Activated naive CD4-positive, alpha-beta T cell treated with anti-CD3 and anti-CD28 coated beads for 36 hours (primary cell): ENCODE measurements at regions of chr9 and their contacts with region 1.

Region 1: DNA sequence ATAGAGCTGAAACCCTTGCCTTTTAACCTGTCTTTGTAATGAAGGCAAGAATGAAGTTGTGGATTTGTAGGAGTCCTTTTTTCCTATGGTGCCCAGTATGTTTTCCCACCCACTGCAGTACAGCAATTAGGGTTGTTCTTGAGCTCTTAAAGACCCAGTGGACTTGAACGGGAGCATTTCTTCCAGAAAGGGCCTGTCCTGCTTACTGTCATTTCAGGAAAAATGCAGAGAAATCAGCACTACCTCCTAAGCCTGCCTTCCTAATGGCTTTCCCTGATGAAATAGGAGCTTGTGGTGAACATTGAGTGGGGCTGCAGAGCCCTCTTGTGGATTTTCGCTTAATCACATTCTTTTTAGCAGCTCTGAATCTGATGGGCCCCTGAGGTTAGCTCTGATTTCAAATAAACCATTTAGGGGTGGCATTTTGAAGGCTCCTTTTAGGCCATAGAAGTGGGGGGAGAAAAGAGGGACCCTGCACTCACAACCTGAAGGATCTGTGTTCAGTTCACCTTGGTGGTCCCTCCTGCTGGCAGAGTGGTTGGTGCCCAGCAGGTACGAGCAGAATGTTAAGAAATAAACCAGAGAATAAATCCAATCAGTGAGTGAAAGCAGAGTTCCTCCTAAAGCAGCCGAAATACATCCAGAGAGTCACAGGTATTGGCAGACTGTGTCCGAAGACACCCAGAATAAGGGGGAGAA is 188.0 kb upstream of the KLF9 start:
- DNase-seq: peak; percentile 71
- H3K4me3 Mint-ChIP-seq: no peak overlapping the region
- H3K27ac Mint-ChIP-seq: no peak overlapping the region
- H3K4me1 Mint-ChIP-seq: peaks cover 8% of the 10 kb centered on the region
- H3K27me3 Mint-ChIP-seq: no peaks in the 10 kb centered on the region

Region 2: GRCh38 chr9:70111042-70111602 is 491.3 kb before region 1 on chr9:
- CTCF ChIA-PET with region 1: interaction called, 16 read pairs
- intact Hi-C with region 1: loop called (anchors 2 kb)
- DNase-seq: peak; percentile 76
- H3K4me3 Mint-ChIP-seq: peak overlapping the region; percentile 22
- H3K27ac Mint-ChIP-seq: no peak overlapping the region
- H3K4me1 Mint-ChIP-seq: peaks cover 9% of the 10 kb centered on the region
- H3K27me3 Mint-ChIP-seq: peaks cover 3% of the 10 kb centered on the region

Region 3: DNA sequence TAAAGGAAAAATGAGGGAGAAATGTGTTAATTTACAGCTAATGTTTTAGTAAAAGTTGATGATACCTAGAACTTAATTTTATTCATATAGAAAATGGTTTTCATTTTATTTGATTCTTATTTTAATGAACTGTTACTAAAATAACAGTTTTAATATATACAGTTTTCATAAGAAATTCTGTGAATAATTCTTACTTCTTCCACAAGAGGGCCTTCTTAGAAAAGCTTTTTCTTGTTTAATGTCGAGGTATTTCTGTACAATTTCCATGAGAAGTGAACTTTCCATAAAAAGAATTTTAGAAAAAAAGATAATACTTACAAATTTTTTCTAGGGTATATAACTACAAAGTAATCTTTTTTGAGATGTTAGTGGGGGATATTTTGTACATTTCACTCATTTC is 261.9 kb before region 1 on chr9:
- CTCF ChIA-PET with region 1: interaction called, 52 read pairs
- intact Hi-C with region 1: loop called (anchors 1 kb)
- DNase-seq: no peak
- H3K4me3 Mint-ChIP-seq: no peak overlapping the region
- H3K27ac Mint-ChIP-seq: no peak overlapping the region
- H3K4me1 Mint-ChIP-seq: no peaks in the 10 kb centered on the region
- H3K27me3 Mint-ChIP-seq: no peaks in the 10 kb centered on the region

Region 4: GRCh38 chr9:70398145-70398556 is 204.3 kb before region 1 on chr9:
- CTCF ChIA-PET with region 1: interaction called, 11 read pairs
- intact Hi-C with region 1: no loop called
- DNase-seq: no peak
- H3K4me3 Mint-ChIP-seq: peak overlapping the region; percentile 35
- H3K27ac Mint-ChIP-seq: peak overlapping the region; percentile 68
- H3K4me1 Mint-ChIP-seq: peaks cover 78% of the 10 kb centered on the region
- H3K27me3 Mint-ChIP-seq: no peaks in the 10 kb centered on the region

Region 5: GRCh38 chr9:70419546-70420266 is 182.8 kb before region 1 on chr9:
- CTCF ChIA-PET with region 1: interaction called, 10 read pairs
- intact Hi-C with region 1: loop called (anchors 1 kb)
- DNase-seq: peak; percentile 94
- H3K4me3 Mint-ChIP-seq: peak overlapping the region; percentile 96
- H3K27ac Mint-ChIP-seq: peak overlapping the region; percentile 100
- H3K4me1 Mint-ChIP-seq: peaks cover 47% of the 10 kb centered on the region
- H3K27me3 Mint-ChIP-seq: no peaks in the 10 kb centered on the region

Region 6: GRCh38 chr9:70519912-70520724 is 82.4 kb before region 1 on chr9:
- CTCF ChIA-PET with region 1: interaction called, 5 read pairs
- intact Hi-C with region 1: loop called (anchors 1 kb)
- DNase-seq: peak; percentile 49
- H3K4me3 Mint-ChIP-seq: peak overlapping the region; percentile 53
- H3K27ac Mint-ChIP-seq: peak overlapping the region; percentile 82
- H3K4me1 Mint-ChIP-seq: peaks cover 32% of the 10 kb centered on the region
- H3K27me3 Mint-ChIP-seq: no peaks in the 10 kb centered on the region

Region 7: GRCh38 chr9:70805949-70806348 is 203.5 kb after region 1 on chr9:
- CTCF ChIA-PET with region 1: no interaction called
- intact Hi-C with region 1: no loop called
- DNase-seq: no peak
- H3K4me3 Mint-ChIP-seq: no peak overlapping the region
- H3K27ac Mint-ChIP-seq: no peak overlapping the region
- H3K4me1 Mint-ChIP-seq: no peaks in the 10 kb centered on the region
- H3K27me3 Mint-ChIP-seq: peaks cover 13% of the 10 kb centered on the region